Left lung (tissue), 14 donors: ENCODE measurements at regions of chr6 and their contacts with region 1.

Region 1: DNA sequence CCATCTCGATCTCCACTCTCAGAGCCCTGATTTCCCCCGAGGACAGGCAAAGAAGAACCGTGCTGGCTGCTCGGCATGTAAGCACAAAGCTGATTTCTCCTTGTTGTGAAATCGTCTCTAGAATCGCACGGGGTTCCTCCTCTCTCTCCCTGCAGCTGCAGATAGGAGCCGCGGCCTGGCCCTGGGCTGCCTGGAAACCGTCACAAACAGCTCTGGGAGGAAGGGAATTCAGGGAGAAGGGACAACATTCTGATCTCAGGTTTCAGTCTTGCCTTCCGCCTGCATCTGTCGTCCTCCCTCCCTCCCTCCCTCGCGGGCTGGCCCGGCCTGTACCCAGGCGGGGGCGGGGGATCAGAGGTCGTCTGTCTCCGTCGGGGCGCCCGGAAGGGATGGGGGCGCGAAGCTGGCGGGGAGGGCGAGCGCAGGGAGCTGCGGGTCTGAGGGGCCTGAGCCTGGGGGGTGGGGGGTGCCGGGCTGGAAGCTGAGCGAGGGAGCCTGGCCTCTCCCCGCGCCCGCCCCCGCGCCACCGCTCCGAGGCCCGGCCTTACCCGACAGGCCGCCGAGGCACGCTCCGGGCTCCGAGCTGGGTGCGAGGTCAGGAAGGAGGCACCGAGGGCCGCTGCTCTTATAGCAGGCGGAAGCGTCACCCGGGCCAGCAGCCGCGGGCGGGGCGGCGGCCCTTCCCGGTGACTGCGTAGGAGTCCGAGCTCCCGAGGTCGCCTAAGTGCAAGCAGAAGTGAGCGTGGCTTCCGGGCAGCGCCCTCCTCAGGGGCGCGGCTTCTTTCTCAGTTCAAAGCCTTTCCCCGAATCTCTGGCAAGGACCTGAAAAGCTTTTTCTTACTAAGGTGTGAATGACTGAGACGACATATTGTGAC is at the start of gene SERPINB1:
- DNase-seq: peak; percentile 86 to 100 (median 94)
- ATAC-seq: peak; percentile 89
- H3K4me3 ChIP-seq: peak within 1 kb of the TSS; percentile 30 to 67
- H3K27ac ChIP-seq: peak within 1 kb of the TSS; percentile 95 to 96
- H3K4me1 ChIP-seq: peaks cover 27 to 81% of the 10 kb centered on the region in 2 donors
- H3K27me3 ChIP-seq: no peaks in the 10 kb centered on the region
- CTCF ChIP-seq: no peak
- polyA plus RNA-seq, gene SERPINB1: 26.8 to 32.6 (median 29.2) TPM

Region 2: GRCh38 chr6:2799936-2800527 is 41.5 kb before region 1 on chr6:
- intact Hi-C with region 1: loop called in 1 of 2 experiments (anchors 5 kb)
- DNase-seq: no peak
- ATAC-seq: no peak
- H3K4me3 ChIP-seq: no peak overlapping the region
- H3K27ac ChIP-seq: peak overlapping the region in 1 of 2 donors; percentile 25
- H3K4me1 ChIP-seq: peaks cover 0 to 55% of the 10 kb centered on the region in 2 donors
- H3K27me3 ChIP-seq: no peaks in the 10 kb centered on the region
- CTCF ChIP-seq: no peak

Region 3: DNA sequence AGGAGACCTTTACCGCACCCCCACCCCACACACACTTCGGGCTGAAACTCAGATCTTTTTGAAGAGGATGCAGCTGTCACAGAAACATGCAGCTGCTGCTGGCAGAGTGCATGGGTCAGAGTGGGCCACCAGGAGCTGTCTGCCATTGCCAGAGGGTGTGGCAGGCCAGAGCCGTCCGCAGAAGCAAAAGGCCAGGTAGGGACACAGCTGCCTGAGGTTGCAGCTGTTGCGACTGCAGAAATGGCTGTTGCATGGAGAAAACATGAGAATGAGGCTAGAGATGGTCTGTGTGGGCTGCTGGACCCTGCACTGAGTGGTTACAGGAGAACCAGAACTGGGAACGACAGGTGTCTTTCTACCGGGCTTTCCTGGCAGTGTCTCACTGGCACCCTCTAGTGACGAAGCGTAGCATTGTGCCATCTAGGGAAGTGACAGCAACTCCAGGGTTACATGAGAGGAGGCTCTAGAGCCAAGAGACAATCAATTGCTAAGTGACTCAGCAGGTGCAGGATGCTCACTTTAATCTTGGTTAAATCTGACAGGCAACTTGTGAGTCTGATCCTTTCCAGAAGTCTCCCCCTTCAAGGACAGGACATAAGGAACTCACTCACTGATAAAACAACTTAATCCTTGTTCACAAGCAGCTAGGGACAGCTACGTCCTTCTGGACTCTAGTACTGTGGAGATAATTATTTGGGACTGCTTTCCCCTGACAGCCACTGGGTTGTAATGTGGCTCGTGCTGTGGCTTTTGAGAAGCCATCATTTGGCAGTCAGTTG is 90.7 kb after region 1 on chr6:
- intact Hi-C with region 1: loop called in 1 of 2 experiments (anchors 5 kb)
- DNase-seq: peak in 3 of 4 donors; percentile 57 to 79 (median 79)
- ATAC-seq: peak; percentile 100
- H3K4me3 ChIP-seq: no peak overlapping the region
- H3K27ac ChIP-seq: no peak overlapping the region
- H3K4me1 ChIP-seq: peaks cover 3 to 8% of the 10 kb centered on the region in 2 donors
- H3K27me3 ChIP-seq: no peaks in the 10 kb centered on the region
- CTCF ChIP-seq: peak; percentile 91 to 96

Region 4: DNA sequence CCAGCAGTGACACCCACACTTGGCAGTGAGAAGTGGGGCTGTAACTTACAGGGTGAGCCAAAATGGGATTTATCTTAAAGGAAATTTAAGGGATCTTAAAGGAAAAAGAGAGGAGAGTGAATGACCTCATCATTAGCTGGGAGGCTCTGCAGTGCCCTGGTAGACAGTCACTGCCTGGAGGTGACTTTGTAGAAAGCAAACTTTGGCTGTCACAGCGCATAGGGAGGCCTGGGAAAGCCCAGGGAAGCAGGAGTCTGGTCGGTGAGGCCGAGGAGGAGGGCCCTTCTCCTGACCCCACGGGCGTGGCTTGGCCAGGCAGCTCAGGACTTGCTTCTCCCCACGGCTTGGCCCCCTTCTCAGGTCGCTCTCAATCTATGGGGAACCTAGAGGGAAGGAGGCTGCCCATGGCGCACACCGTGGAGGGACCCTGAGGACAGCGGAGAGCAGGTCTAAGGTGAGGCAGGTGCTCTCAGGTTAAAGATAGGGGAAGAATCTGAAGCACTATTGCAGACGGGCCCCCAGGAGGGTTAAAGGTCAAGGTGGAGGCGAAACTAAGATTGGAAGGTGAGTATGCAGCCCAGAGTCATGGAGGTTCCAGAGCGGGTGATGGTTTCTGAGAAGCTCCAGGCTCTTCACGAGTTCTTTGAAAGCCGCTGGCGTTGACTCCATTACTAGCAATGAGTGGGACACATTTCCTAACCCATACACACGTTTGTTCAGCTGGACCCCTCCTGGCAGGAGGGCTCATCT is 211.2 kb after region 1 on chr6:
- intact Hi-C with region 1: loop called in 1 of 2 experiments (anchors 10 kb)
- DNase-seq: no peak
- ATAC-seq: no peak
- H3K4me3 ChIP-seq: peak overlapping the region in 1 of 2 donors; percentile 58
- H3K27ac ChIP-seq: peak overlapping the region in 1 of 2 donors; percentile 82
- H3K4me1 ChIP-seq: peaks cover 4 to 31% of the 10 kb centered on the region in 2 donors
- H3K27me3 ChIP-seq: no peaks in the 10 kb centered on the region
- CTCF ChIP-seq: no peak